H1 (cell line): ENCODE measurements at regions of chr5 and their contacts with region 1.

Region 1: DNA sequence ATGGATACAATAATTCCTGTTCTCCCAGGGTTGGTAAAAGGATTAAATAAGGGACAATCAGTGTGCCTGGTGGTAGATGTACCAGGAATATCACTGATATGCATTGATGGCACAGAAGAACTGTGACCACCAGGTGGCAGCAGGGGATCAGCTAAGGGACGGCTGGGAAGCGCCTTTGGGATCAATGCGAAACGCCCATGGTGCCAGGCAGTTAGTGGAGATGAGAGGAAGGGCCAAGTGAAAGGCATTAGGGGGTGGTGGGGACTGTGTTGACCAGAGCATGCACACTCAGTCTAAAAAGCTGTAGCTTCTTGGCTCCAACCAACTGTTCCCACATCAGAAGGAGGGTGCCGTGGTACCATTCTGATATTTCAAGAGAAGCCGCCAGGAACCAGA is 55.6 kb downstream of the ARHGEF37 start:
- DNase-seq: peak; percentile 49 to 83
- H3K4me3 ChIP-seq: no peak overlapping the region
- H3K27ac ChIP-seq: no peak overlapping the region
- H3K4me1 ChIP-seq: peaks cover 12 to 16% (median 12%) of the 10 kb centered on the region in 4 experiments
- H3K27me3 ChIP-seq: no peaks in the 10 kb centered on the region; a peak in 1 of 7 replicates
- CTCF ChIP-seq: peak; percentile 85 to 93 (median 91)
- EP300 ChIP-seq: no peak
- POLR2A ChIP-seq: no peak
- RAD21 ChIP-seq: peak; percentile 97 to 98

Region 2: GRCh38 chr5:149392718-149393117 is 244.1 kb before region 1 on chr5:
- CTCF ChIA-PET with region 1: no interaction called
- POLR2A ChIA-PET with region 1: no interaction called
- DNase-seq: no peak
- H3K4me3 ChIP-seq: no peak overlapping the region
- H3K27ac ChIP-seq: no peak overlapping the region
- H3K4me1 ChIP-seq: no peaks in the 10 kb centered on the region
- H3K27me3 ChIP-seq: no peaks in the 10 kb centered on the region; a peak in 1 of 7 replicates
- CTCF ChIP-seq: no peak
- EP300 ChIP-seq: no peak
- POLR2A ChIP-seq: no peak
- RAD21 ChIP-seq: no peak

Region 3: DNA sequence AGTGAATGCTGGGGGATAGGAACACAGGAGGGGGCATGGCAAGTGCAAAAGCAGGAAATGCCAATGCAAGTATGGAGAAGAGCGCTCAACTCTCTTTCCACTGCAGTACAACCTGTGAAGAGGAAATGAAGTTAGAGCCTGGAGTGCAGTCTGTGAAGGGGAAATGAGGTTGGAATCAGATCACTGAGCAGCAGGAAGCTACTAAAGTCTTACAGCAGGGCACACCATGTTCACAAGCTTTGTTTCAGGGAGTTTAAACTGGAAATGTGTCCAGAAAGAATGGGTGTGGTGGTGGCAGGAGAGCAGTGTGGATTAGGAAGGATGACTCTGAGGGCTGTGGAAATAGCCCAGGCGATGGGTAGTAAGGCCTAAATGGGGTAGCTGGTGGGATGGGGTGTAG is 40.1 kb before region 1 on chr5:
- CTCF ChIA-PET with region 1: no interaction called
- POLR2A ChIA-PET with region 1: no interaction called
- DNase-seq: no peak
- H3K4me3 ChIP-seq: no peak overlapping the region
- H3K27ac ChIP-seq: no peak overlapping the region
- H3K4me1 ChIP-seq: peaks cover 0 to 3% (median 0%) of the 10 kb centered on the region in 4 experiments; a peak in 2 of 7 replicates
- H3K27me3 ChIP-seq: no peaks in the 10 kb centered on the region
- CTCF ChIP-seq: no peak
- EP300 ChIP-seq: no peak
- POLR2A ChIP-seq: no peak
- RAD21 ChIP-seq: no peak

Region 4: DNA sequence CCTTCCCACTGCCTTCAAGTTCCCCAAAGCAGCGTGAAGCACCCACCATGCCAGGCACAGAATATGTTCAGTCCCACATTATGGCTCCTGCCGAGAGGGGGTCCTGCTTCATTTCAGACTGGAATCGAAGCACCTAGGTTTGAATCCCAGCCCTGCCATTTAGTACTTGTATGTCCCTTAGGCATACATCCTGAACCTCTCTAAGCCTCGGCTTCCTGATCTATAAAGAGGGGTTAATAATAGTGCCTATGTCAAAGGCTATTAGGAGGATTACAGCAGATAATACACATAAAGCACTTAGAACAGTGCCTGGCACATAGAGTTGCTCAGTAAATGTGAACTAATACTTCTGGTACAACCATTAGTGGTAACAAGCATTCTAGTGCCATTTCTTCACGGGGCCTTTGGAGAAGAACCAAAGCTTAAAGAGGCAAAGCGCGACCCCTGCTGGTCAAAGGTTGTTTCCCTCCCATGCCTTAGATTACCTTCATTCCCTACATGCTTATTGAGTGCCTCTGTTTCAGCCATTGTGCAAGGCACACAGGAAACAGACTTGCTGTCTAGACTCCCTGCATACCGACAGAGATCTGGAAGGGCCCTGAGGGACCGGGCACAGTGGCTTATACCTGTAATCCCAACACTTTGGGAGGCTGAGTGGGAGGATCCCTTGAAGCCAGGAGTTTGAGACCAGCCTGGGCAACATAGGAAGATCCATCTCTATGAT is 191.5 kb after region 1 on chr5:
- CTCF ChIA-PET with region 1: interaction called, 470 read pairs
- POLR2A ChIA-PET with region 1: no interaction called
- DNase-seq: peak; percentile 73 to 94
- H3K4me3 ChIP-seq: no peak overlapping the region
- H3K27ac ChIP-seq: no peak overlapping the region
- H3K4me1 ChIP-seq: no peaks in the 10 kb centered on the region
- H3K27me3 ChIP-seq: no peaks in the 10 kb centered on the region
- CTCF ChIP-seq: peak; percentile 54 to 96 (median 88)
- EP300 ChIP-seq: no peak
- POLR2A ChIP-seq: no peak
- RAD21 ChIP-seq: peak; percentile 92 to 94